GM12878 (cell line): ENCODE measurements at regions of chr4 and their contacts with region 1.

Region 1: DNA sequence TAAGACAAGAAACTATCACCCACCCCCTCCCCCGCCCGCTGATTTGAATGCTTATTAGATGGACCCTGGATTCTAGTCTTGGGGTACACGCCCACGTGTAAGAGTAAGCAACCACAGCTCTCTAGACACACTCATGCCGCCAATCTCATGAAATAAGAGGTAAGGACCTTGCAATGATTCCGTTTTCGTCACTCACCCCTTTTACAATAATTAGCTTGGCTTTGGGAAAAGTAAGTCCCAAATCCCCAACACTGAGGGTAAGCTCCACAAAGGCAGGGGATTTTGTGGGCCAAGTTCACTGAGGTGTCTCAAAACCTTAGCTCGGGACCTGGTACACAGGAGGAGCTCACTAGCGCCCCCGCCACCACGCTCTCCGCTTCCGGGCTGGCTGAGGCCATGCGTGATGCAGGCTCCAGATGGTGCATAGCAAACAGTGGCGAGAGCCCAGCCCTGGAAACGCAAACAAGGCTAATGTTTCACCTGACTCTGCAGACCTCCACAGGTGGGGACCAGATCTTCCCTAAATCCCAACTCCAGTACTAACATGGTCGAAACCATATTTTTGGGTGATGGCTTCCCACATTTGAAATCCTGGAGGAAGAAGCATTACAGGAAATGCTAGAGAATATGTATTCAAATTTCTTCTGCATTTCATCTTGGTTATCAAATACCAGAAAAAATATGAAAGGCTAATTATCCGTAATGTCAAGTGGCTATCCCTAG is 4.1 kb downstream of the PLAC8 start:
- DNase-seq: peak; percentile 90
- ATAC-seq: peak; percentile 80
- H3K4me3 ChIP-seq: peak overlapping the region; percentile 78
- H3K27ac ChIP-seq: peak overlapping the region; percentile 71
- H3K4me1 ChIP-seq: peaks cover 14% of the 10 kb centered on the region
- H3K27me3 ChIP-seq: no peaks in the 10 kb centered on the region
- CTCF ChIP-seq: peak; percentile 80 to 94 (median 89); a peak in 5 of 6 replicates
- EP300 ChIP-seq: peak; percentile 46 to 69; a peak in 2 of 4 replicates
- POLR2A ChIP-seq: peak; percentile 67
- RAD21 ChIP-seq: peak; percentile 46

Region 2: DNA sequence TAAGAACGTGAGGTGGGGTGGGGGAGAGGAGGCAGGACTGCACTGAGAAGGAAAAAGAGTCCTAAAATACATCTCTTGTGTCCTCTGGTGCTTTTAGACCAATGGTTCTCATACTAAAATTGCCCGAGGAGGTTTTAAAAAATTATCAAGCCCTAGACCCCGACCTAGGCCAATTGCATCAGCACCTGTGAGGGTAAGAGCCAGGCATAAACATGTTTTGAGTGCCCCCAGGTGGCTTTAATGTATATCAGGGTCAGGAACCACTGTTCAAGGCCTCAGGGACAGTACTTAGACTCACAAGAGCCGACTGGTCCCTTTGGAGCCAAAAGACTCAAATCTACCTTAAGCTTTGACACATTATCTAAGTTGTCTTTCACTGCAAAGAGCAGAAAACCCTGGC is 511.0 kb before region 1 on chr4:
- CTCF ChIA-PET with region 1: no interaction called
- POLR2A ChIA-PET with region 1: no interaction called
- RAD21 ChIA-PET with region 1: no interaction called
- SMC1A ChIA-PET with region 1: no interaction called
- in situ Hi-C with region 1: no loop called
- intact Hi-C with region 1: no loop called
- DNase-seq: no peak
- ATAC-seq: 0 out of 3 replicates have a peak, but pooled peaks have one; percentile 18
- H3K4me3 ChIP-seq: no peak overlapping the region
- H3K27ac ChIP-seq: no peak overlapping the region
- H3K4me1 ChIP-seq: no peaks in the 10 kb centered on the region
- H3K27me3 ChIP-seq: no peaks in the 10 kb centered on the region; a peak in 2 of 4 replicates
- CTCF ChIP-seq: no peak
- EP300 ChIP-seq: no peak
- POLR2A ChIP-seq: no peak
- RAD21 ChIP-seq: 0 out of 2 replicates have a peak, but pooled peaks have one; percentile 2

Region 3: DNA sequence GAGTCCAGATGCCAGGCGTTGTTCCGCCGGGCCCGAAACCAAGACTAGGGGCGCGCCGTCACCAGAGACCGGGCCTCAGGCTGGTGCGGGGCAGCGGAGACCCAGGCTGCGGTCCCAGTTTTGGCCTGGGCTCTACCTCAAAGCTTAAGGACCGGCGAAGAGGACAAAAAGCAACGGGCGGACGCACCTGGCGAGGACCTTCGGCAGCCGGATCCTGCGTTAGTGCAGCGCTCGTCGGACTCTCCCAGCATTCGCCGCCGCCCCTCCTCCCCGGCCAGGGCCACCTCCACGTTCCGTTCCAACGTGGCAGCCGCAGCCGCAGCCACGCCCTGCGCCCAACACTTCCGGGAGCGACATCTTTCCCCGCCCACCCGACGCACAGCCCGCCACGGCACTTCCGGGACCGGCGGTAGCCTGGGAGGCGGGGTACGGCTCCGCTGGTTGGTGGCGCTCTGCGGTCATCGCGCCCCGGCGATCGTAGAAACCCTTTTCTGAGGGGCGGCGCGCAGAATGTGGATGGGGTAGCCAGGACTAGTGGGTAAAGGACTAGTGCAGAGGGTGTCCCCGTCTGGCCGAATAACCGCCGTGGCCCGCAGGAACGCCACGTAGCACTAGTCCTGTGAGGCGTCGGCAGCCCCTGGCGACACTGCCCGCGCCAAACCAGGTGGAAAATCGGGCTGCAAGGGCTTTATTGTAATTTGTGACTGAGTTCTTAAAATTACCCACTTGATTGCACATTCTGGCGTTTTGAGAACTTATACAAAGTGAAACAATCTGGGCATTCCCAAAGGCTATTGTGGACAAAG is 219.3 kb before region 1 on chr4 and contains the start of gene SEC31A:
- CTCF ChIA-PET with region 1: no interaction called
- POLR2A ChIA-PET with region 1: no interaction called
- RAD21 ChIA-PET with region 1: no interaction called
- SMC1A ChIA-PET with region 1: no interaction called
- in situ Hi-C with region 1: no loop called
- intact Hi-C with region 1: loop called (anchors 5 kb)
- DNase-seq: peak; percentile 84
- ATAC-seq: peak; percentile 90
- H3K4me3 ChIP-seq: peak within 1 kb of the TSS; percentile 90
- H3K27ac ChIP-seq: peak within 1 kb of the TSS; percentile 94
- H3K4me1 ChIP-seq: peaks cover 3% of the 10 kb centered on the region; the same call in 1 of the 2 replicates
- H3K27me3 ChIP-seq: no peaks in the 10 kb centered on the region
- CTCF ChIP-seq: 0 out of 6 replicates have a peak, but pooled peaks of 1 of the 3 experiments have one; percentile 15
- EP300 ChIP-seq: peak in 1 of 2 experiments; percentile 31; a peak in 1 of 4 replicates
- POLR2A ChIP-seq: peak; percentile 99
- RAD21 ChIP-seq: no peak
- polyA plus RNA-seq, gene SEC31A: 74.6 to 80.8 TPM

Region 4: DNA sequence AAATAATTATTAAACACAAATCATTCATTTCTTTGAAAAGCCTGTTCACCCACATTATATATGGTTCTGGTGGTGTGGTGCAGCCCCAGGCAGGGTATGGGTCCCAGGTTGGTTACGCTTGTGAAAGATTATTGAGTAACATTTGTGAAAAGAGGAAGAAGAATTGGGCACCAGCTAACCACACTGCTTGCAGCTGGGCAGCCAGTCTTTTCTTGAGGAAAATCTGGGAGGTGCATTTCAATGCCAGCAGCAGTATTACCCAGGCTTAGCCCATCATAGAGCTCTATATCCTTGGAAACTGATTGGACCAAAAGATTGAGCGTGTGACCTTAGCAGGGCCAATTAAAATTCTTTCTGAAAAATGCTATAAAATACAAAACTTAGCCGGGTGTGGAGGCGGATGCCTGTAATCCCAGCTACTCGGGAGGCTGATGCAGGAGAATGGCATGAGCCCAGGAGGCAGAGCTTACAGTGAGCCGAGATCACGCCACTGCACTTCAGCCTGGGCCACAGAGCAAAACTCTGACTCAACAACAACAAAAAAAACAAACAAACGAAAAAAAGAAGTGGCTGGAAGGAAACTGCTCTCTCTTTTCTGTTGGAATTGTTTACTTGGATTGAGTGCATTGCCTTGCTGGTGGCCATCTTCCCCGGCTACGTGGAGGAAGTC is 13.9 kb after region 1 on chr4:
- CTCF ChIA-PET with region 1: interaction called, 3 read pairs
- POLR2A ChIA-PET with region 1: interaction called, 5 read pairs
- RAD21 ChIA-PET with region 1: interaction called, 4 read pairs
- SMC1A ChIA-PET with region 1: interaction called, 35 read pairs
- in situ Hi-C with region 1: no loop called
- intact Hi-C with region 1: no loop called
- DNase-seq: no peak
- ATAC-seq: peak; percentile 86
- H3K4me3 ChIP-seq: no peak overlapping the region
- H3K27ac ChIP-seq: no peak overlapping the region
- H3K4me1 ChIP-seq: peaks cover 15% of the 10 kb centered on the region
- H3K27me3 ChIP-seq: no peaks in the 10 kb centered on the region
- CTCF ChIP-seq: no peak
- EP300 ChIP-seq: no peak
- POLR2A ChIP-seq: no peak
- RAD21 ChIP-seq: no peak

Region 5: GRCh38 chr4:83180431-83180968 is 70.1 kb after region 1 on chr4:
- CTCF ChIA-PET with region 1: interaction called, 11 read pairs
- POLR2A ChIA-PET with region 1: interaction called, 8 read pairs
- RAD21 ChIA-PET with region 1: interaction called, 61 read pairs
- SMC1A ChIA-PET with region 1: interaction called, 61 read pairs
- in situ Hi-C with region 1: no loop called
- intact Hi-C with region 1: loop called (anchors 1 kb)
- DNase-seq: peak; percentile 79
- ATAC-seq: peak; percentile 67
- H3K4me3 ChIP-seq: peak overlapping the region; percentile 33; the same call in 1 of the 2 replicates
- H3K27ac ChIP-seq: peak overlapping the region; percentile 29; the same call in 1 of the 2 replicates
- H3K4me1 ChIP-seq: peaks cover 30% of the 10 kb centered on the region
- H3K27me3 ChIP-seq: no peaks in the 10 kb centered on the region
- CTCF ChIP-seq: no peak
- EP300 ChIP-seq: peak; percentile 9 to 50; a peak in 1 of 4 replicates
- POLR2A ChIP-seq: no peak
- RAD21 ChIP-seq: no peak

Region 6: DNA sequence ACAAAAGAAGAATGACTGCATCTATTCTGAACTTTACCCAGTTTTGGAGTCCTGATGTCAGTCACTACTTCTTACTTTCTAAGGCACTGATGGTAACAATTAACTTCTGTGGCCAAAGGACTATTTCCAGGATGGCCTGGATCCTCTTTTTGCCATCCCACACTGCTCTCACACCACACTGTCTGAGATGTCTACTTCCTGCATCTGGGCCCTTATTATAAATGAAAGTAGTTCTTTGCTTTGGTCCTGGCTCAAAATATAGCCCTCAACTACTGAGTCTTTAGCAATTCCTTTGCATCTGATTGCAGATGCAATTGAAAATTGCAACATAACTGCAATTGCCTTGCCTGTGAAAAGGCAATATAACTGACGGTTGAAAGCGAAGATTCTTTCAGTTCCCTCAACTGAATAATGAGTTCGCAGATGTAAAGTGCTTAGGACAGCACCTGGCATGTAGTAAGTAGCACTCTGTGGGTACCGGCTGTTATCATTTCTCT is 130.0 kb after region 1 on chr4:
- CTCF ChIA-PET with region 1: interaction called, 4 read pairs
- POLR2A ChIA-PET with region 1: interaction called, 5 read pairs
- RAD21 ChIA-PET with region 1: interaction called, 22 read pairs
- SMC1A ChIA-PET with region 1: interaction called, 34 read pairs
- in situ Hi-C with region 1: no loop called
- intact Hi-C with region 1: no loop called
- DNase-seq: peak; percentile 96
- ATAC-seq: peak; percentile 90
- H3K4me3 ChIP-seq: no peak overlapping the region
- H3K27ac ChIP-seq: peak overlapping the region; percentile 75; the same call in 1 of the 2 replicates
- H3K4me1 ChIP-seq: peaks cover 20% of the 10 kb centered on the region
- H3K27me3 ChIP-seq: no peaks in the 10 kb centered on the region
- CTCF ChIP-seq: no peak
- EP300 ChIP-seq: peak; percentile 76 to 89; a peak in 3 of 4 replicates
- POLR2A ChIP-seq: no peak
- RAD21 ChIP-seq: no peak

Region 7: DNA sequence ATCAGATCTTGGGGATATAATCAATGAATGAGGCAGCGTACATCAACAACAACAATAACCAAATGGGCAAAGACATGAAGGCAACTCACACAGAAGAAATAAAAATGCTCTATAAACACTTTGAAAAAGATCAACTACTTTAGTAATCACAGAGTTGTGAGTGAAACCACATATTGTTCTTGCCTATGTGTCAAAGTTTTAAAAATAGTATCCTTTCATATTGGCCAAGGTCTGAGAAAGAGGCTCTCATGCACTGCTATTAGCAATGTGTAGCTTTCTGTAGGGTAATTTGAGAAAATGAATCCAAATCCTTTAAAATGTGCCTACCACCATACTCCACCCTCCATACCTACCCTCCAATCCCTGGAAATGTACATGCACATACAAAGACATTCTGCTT is 149.2 kb after region 1 on chr4:
- CTCF ChIA-PET with region 1: interaction called, 11 read pairs
- POLR2A ChIA-PET with region 1: interaction called, 8 read pairs
- RAD21 ChIA-PET with region 1: interaction called, 17 read pairs
- SMC1A ChIA-PET with region 1: interaction called, 53 read pairs
- in situ Hi-C with region 1: no loop called
- intact Hi-C with region 1: loop called (anchors 1 kb)
- DNase-seq: no peak
- ATAC-seq: peak; percentile 69
- H3K4me3 ChIP-seq: no peak overlapping the region
- H3K27ac ChIP-seq: peak overlapping the region; percentile 28
- H3K4me1 ChIP-seq: peaks cover 32% of the 10 kb centered on the region
- H3K27me3 ChIP-seq: no peaks in the 10 kb centered on the region
- CTCF ChIP-seq: no peak
- EP300 ChIP-seq: no peak
- POLR2A ChIP-seq: no peak
- RAD21 ChIP-seq: no peak

Region 8: DNA sequence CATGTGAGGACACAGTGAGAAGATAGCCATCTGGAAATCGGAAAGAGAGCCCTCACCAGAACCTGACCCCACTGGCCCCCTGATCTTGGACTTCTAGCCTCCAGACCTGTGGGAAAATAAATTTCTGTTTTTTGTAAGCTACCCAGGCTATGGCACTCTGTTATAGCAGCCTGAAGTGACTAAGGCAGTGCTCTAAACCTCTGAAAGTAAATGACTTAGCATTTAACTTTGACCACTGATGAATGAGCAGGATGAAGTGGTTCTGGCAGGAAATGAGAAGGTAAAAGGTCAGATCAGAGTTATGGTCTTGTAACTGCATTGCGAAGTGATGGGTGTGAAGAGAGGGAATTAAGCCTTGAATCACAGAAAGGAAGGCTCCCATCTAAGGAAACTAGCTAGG is 442.5 kb after region 1 on chr4:
- CTCF ChIA-PET with region 1: no interaction called
- POLR2A ChIA-PET with region 1: no interaction called
- RAD21 ChIA-PET with region 1: no interaction called
- SMC1A ChIA-PET with region 1: no interaction called
- in situ Hi-C with region 1: no loop called
- intact Hi-C with region 1: no loop called
- DNase-seq: no peak
- ATAC-seq: peak; percentile 81
- H3K4me3 ChIP-seq: no peak overlapping the region
- H3K27ac ChIP-seq: no peak overlapping the region
- H3K4me1 ChIP-seq: peaks cover 13% of the 10 kb centered on the region
- H3K27me3 ChIP-seq: no peaks in the 10 kb centered on the region
- CTCF ChIP-seq: no peak
- EP300 ChIP-seq: no peak
- POLR2A ChIP-seq: no peak
- RAD21 ChIP-seq: no peak